ENCODE measurements at regions of chr15 and their contacts with region 1.

Region 1: DNA sequence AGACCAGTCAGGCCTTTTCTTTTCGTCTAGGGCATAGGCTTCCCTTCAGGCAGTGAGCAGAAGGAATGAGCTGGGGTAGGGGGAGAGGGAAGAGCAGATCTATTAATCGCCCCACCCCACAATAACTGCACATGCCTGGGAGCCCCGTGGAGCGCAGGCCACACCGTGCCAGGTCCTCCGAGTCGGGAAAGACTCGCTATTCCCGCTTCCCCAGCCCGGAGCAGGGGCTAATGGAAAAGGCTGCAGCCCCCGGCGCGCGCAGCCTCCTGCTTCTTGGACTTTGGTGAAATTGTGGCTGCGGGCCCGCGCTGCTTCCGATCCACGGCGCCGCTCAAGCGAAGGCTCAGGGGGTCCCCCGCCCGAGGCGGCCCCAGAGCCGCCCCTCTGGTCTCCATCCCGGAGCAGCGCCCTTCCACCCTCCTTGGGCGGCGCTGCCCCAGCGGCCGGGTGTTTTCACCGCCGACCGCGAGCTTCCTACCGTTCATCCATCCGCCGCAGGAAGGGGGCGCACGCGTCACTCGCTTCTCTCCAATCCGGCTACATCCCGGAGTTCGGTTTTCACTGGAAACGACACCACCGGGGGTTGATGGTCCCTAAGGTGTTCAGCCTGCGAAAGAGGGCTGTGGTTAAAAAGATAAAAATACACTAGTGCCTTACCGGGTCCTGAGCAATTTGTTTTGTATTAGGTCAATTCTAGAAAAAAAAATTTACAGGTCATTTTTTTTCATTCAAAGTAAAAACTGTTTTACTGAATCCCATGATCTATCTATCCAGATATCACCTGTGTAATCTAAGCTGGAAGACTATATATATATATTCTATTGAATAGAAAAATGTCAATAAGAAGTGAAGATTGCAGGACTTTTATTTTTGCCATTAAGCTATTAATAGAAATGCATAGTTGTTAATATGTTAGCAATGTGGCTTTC is 4.4 kb upstream of the SYNM start:
- DNase-seq: peak; percentile 77
- H3K27ac ChIP-seq: no peak overlapping the region
- CTCF ChIP-seq: peak; percentile 98

Region 2: GRCh38 chr15:99138491-99138982 is 38.0 kb after region 1 on chr15:
- CTCF ChIA-PET with region 1: no interaction called
- POLR2A ChIA-PET with region 1: no interaction called
- DNase-seq: no peak
- H3K27ac ChIP-seq: no peak overlapping the region
- CTCF ChIP-seq: no peak

Region 3: GRCh38 chr15:99209326-99209725 is 108.8 kb after region 1 on chr15:
- CTCF ChIA-PET with region 1: interaction called, 10 read pairs
- POLR2A ChIA-PET with region 1: interaction called, 3 read pairs
- DNase-seq: no peak
- H3K27ac ChIP-seq: no peak overlapping the region
- CTCF ChIP-seq: no peak

Measured in RWPE1 (cell line).